HEK293T (cell line): ENCODE measurements at regions of chr1 and their contacts with region 1.

Region 1: DNA sequence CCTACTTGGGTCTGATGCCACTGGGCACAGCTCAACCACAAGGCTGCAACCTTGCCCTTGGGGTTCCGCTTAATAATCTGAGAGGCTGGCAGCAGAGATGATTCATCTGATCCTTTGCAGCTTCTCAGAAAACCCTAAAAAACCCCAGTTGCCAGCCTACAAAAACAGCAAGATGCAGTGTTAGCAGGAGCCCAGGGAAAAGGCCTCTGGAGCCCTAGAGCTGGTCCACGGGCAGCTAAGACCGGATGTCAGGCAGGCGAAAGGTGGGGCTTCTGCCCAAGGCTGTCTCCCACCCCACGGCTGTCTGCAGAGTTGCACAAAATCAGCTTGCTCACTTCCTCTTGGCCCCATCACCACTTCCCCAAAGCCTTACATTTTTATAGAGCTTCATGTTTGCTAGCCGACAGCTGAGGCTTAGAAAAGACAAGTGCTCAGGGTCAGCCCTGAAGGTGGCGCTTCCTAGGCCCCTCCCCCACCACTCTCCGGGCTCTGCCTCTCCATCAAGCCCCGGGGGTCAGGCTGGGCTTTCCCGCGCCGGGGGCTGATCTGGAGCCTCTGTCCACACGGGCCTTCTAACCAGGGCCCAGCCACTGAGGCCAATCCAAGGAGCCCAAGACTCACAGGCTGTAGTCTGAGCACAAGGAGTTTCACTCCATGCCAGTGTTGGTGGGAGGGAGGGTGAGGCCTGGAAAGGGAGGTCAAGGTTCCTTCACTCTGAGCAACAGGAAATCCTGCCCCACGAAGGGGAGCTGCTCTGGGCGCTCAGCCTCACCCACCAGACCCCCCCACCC is 4.2 kb upstream of the ADORA3 start:
- DNase-seq: peak; percentile 57

Region 2: GRCh38 chr1:111463029-111463683 is 44.5 kb before region 1 on chr1:
- CTCF ChIA-PET with region 1: no interaction called
- POLR2A ChIA-PET with region 1: no interaction called
- DNase-seq: no peak

Region 3: GRCh38 chr1:111481387-111482221 is 26.0 kb before region 1 on chr1:
- CTCF ChIA-PET with region 1: interaction called, 23 read pairs
- POLR2A ChIA-PET with region 1: interaction called, 3 read pairs
- DNase-seq: peak; percentile 86

Region 4: DNA sequence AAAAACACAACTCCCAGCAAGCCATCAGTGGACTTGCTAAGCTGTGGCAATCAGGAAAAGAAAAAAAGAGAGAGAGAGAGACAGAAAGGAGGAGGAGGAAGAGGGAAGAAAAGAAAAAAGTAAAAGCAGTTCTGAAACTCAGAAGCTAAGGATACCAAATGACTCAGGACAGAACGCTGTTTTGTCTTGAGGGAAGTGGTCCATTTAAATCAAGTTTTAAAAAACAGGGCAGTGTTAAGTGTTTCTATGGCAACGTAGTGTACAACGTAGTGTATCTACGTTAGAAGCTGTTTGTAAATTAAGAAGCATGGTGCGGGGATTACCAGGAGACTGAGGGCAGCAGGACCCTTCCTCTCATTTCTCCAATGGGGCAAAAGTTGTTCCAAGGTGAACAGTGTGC is 10.0 kb before region 1 on chr1:
- CTCF ChIA-PET with region 1: interaction called, 6 read pairs
- POLR2A ChIA-PET with region 1: interaction called, 20 read pairs
- DNase-seq: no peak

Region 5: GRCh38 chr1:111592389-111593361 is 85.1 kb after region 1 on chr1:
- CTCF ChIA-PET with region 1: interaction called, 5 read pairs
- POLR2A ChIA-PET with region 1: interaction called, 11 read pairs
- DNase-seq: peak; percentile 68

Region 6: DNA sequence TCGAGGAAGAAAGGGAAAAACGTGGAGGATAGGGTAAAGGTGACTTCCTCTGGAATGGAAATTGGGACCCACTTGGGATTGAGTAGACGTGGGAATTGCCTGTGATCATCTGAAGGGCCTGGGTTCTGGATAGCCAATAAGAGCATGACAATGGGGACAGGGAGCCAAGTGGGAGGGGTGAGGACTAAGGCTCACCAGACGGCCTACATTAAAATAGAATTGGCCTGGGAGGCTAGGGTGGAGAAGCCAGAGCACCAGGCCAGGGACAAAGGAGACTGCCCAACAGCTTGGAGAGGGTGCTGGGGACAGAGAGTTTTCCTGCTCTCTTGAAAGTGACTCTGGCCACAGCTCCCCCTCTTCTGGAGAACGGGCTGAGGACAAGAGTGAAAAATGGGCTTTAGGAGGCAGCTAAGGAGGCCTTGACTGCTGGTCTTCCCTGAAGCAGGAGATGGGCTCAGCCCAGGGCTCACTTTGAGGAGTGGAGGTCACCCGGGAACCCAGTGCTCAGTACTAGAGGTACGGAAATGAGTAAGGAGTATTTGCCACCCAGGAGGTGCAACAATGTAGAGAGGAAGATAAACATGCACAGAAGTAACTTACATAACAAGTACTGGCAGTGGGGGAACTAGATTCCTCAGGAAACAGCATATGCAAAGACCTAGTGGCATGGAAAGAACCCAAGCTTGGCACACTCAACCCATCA is 212.8 kb after region 1 on chr1:
- CTCF ChIA-PET with region 1: interaction called, 10 read pairs
- POLR2A ChIA-PET with region 1: interaction called, 6 read pairs
- DNase-seq: no peak